K562 (cell line): ENCODE measurements at regions of chr21 and their contacts with region 1.

Region 1: DNA sequence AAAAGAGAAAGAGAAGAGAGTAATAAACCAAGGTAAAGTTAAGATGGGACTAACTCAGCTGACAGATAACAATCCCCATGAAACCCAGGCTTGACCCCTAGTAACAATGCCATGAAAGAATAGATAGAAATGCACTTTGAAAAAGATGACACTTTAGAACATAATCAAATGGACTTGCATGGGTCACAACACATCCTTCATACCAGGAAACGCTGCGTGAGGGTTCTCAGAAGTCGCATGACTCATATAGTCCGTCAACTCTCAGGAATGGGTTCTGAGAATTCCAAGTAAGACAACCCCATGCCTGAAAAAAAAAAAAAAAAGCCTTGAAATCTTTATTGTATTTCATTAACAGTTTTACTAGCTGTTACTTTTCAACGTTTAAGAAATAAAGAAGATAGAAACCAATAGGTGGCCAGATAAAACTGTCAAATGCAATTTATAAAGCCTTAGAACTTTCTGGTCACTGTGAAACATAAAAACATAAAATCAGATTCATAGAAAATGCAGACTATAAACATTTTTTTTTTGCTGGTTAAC is 202.0 kb downstream of the NCAM2 start:
- DNase-seq: peak; percentile 47 to 96 (median 64)
- ATAC-seq: peak; percentile 74
- H3K4me3 ChIP-seq: peak overlapping the region; percentile 1; the same call in 1 of the 2 replicates
- H3K27ac ChIP-seq: peak overlapping the region; percentile 90
- H3K4me1 ChIP-seq: peaks cover 24 to 52% of the 10 kb centered on the region in 2 experiments
- H3K27me3 ChIP-seq: no peaks in the 10 kb centered on the region
- CTCF ChIP-seq: 0 out of 6 replicates have a peak, but pooled peaks of 1 of the 3 experiments have one; percentile 2
- EP300 ChIP-seq: peak; percentile 86
- POLR2A ChIP-seq: peak; percentile 28; the same call in 1 of the 2 replicates
- RAD21 ChIP-seq: no peak

Region 2: GRCh38 chr21:21146587-21147373 is 53.4 kb before region 1 on chr21:
- CTCF ChIA-PET with region 1: no interaction called
- POLR2A ChIA-PET with region 1: interaction called, 3 read pairs
- in situ Hi-C with region 1: no loop called
- intact Hi-C with region 1: loop called (anchors 2 kb)
- DNase-seq: peak; percentile 27 to 96 (median 45)
- ATAC-seq: peak; percentile 89
- H3K4me3 ChIP-seq: peak overlapping the region; percentile 64
- H3K27ac ChIP-seq: peak overlapping the region; percentile 87
- H3K4me1 ChIP-seq: no peaks in the 10 kb centered on the region; a peak in 1 of 5 replicates
- H3K27me3 ChIP-seq: no peaks in the 10 kb centered on the region
- CTCF ChIP-seq: 0 out of 6 replicates have a peak, but pooled peaks of 1 of the 3 experiments have one; percentile 10
- EP300 ChIP-seq: 0 out of 2 replicates have a peak, but pooled peaks have one; percentile 26
- POLR2A ChIP-seq: peak; percentile 93
- RAD21 ChIP-seq: no peak

Region 3: DNA sequence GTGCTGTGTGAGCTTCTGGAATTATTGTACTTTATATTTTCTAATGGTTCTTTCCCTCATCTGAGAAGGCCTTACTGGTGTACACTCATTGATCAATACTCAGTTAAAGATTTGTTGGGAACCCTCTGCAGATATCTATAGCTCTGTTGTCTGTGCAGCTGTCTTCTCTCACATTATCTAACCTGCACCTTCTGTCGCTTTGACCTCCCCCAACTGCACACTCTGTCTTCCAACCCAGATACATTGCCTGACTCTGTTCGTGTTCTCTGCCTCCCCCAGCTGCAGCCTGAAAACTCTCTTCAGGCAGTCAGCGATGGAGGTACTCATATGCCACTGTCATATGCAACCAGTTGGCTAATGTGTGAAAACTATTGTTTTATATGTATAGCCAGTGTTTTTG is 132.3 kb after region 1 on chr21:
- CTCF ChIA-PET with region 1: no interaction called
- POLR2A ChIA-PET with region 1: no interaction called
- in situ Hi-C with region 1: no loop called
- intact Hi-C with region 1: no loop called
- DNase-seq: peak in 2 of 4 experiments; percentile 31 to 64
- ATAC-seq: peak; percentile 92
- H3K4me3 ChIP-seq: no peak overlapping the region
- H3K27ac ChIP-seq: no peak overlapping the region
- H3K4me1 ChIP-seq: peaks cover 0 to 4% of the 10 kb centered on the region in 2 experiments; a peak in 3 of 5 replicates
- H3K27me3 ChIP-seq: no peaks in the 10 kb centered on the region
- CTCF ChIP-seq: no peak
- EP300 ChIP-seq: no peak
- POLR2A ChIP-seq: no peak
- RAD21 ChIP-seq: no peak

Region 4: DNA sequence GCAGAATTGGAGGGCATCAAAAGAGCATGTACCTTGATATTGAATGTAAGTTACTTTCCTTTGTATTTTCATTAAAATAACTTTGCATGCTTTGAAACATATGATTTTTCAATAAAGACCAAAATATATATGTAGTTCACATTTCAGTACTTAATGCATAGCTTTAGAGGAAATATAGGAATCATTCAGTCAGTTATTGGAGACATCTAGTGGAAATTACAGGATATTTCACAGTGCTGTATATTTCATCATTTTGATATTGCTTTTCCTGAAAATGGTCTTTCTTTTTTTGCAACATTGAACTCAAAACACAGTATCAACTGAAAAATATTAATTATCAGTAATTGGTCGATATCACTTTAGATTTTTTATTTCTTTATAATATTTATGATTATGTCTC is 173.8 kb after region 1 on chr21:
- CTCF ChIA-PET with region 1: no interaction called
- POLR2A ChIA-PET with region 1: no interaction called
- in situ Hi-C with region 1: no loop called
- intact Hi-C with region 1: no loop called
- DNase-seq: no peak
- ATAC-seq: peak; percentile 67
- H3K4me3 ChIP-seq: no peak overlapping the region
- H3K27ac ChIP-seq: no peak overlapping the region; the same call in 2 of the 3 replicates
- H3K4me1 ChIP-seq: no peaks in the 10 kb centered on the region
- H3K27me3 ChIP-seq: no peaks in the 10 kb centered on the region
- CTCF ChIP-seq: peak in 2 of 3 experiments; percentile 4 to 49; a peak in 3 of 6 replicates
- EP300 ChIP-seq: no peak
- POLR2A ChIP-seq: no peak
- RAD21 ChIP-seq: no peak; a peak in 2 of 4 replicates